Adrenal gland (tissue), 19 donors: ENCODE measurements at regions of chr1 and their contacts with region 1.

Region 1: DNA sequence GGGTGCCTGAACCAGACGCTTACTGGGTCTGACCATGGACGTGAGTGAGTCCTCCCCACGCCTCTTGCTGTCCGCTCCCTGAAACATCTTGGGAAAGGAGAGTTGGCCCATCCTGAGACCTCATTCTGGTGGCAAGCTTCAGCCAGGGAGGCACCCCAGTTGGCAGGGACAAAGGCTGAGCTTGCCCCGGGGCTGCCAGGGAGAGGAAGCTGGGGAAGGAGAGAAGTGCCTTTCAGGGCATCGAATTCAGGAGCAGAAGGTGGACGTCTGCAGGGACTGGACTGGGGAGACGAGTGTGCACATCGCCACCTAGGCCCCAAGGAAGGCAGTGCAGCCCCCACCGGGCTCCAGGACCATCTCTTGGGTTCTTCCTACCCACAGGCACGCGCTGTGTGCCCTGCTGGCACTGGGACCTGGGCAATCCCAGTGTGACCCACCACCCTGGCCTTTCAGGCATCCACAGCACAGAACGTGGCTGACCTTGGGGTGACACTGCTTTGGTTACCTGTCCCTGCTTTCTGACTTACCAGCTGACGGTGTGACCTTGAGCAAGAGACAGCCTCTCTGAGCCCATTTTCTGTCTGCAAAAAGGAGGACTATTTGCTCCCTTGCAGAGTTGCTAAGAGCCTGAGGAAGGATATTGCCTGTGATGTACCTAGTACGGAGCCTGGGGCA is 133.0 kb upstream of the WNT4 start:
- DNase-seq: peak; percentile 48 to 81 (median 67)
- H3K4me3 ChIP-seq: no peak overlapping the region
- H3K27ac ChIP-seq: no peak overlapping the region
- H3K4me1 ChIP-seq: no peaks in the 10 kb centered on the region
- H3K27me3 ChIP-seq: no peaks in the 10 kb centered on the region
- CTCF ChIP-seq: peak; percentile 63 to 81 (median 74)
- POLR2A ChIP-seq: no peak

Region 2: DNA sequence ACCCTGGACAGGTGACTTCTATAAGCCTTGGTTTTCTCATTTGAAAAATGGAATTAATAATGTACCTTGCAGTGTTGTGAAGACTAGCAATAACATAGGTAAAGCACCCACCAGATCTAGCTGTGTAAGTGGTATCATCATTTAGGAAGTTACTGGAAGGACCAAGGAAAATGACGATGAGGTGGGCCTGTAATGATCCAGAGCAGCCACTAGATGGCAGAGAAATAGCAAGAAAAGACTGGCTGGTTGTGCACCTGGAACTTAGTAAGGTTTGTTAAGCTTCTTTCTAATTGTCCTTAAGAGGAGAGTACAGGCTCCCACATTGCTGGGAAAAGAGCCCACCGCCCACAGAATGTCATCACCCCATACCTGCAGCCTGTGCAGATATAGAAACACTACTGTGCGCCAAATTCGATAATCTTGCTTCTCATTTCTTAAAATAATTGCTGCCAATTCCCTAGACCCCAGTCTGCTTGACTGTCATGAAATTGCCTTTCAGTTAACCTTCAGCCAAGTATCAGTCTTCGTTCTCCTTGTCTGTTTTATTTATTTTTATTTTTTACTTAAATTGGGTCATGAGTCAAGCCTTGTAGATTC is 170.1 kb before region 1 on chr1:
- intact Hi-C with region 1: loop called in 1 of 2 experiments (anchors 10 kb)
- DNase-seq: peak in 2 of 7 donors; percentile 57 to 61
- H3K4me3 ChIP-seq: no peak overlapping the region
- H3K27ac ChIP-seq: no peak overlapping the region
- H3K4me1 ChIP-seq: peaks cover 7 to 32% of the 10 kb centered on the region in 2 donors
- H3K27me3 ChIP-seq: no peaks in the 10 kb centered on the region
- CTCF ChIP-seq: peak; percentile 53 to 90 (median 84)
- POLR2A ChIP-seq: no peak